Natural killer cell (primary cell): ENCODE measurements at regions of chr9 and their contacts with region 1.

Region 1: DNA sequence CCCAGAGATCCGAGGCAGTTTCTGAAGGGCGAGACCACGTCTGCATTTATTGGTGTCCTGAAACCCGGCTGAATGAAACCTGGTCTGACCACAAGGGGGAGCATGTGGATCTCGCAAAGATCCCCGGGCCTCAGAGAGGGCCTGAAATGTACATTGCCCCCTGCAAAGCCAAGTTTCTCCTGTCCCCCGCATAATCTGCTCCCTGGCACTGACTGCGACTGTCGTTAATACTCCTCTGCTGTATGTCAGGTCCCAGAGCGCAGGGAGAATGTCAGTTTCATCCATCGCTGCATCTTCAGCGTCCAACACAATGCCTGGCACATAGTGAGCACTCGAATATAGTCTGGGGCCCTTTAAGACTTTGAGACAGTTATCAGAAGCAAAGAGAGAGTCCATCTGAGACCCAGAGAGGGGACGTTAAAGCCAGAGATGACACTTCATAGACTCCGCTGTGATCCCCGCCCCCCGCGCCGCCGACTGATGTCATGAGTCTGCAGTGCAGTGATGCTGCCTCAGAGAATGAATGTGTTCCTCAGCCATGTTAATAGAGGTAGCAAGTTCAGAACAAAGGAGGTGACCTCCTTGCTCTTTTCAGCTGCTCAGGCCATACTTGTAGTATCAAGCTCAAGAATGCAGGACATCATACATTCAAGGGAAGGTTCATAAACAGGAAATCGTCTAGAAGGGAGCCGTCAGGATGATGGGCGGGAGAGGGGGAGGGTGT is 74.5 kb upstream of the BARHL1 start:
- DNase-seq: peak; percentile 60 to 84
- ATAC-seq: peak; percentile 61 to 85 (median 82)
- H3K4me3 ChIP-seq: no peak overlapping the region
- H3K4me3 Mint-ChIP-seq: peak overlapping the region; percentile 13
- H3K27ac ChIP-seq: no peak overlapping the region
- H3K27ac Mint-ChIP-seq: no peak overlapping the region
- H3K4me1 ChIP-seq: peaks cover 19% of the 10 kb centered on the region
- H3K4me1 Mint-ChIP-seq: peaks cover 17% of the 10 kb centered on the region in 2 donors
- H3K27me3 ChIP-seq: no peaks in the 10 kb centered on the region
- H3K27me3 Mint-ChIP-seq: peaks cover 18 to 45% of the 10 kb centered on the region in 2 donors
- CTCF ChIP-seq: peak; percentile 87

Region 2: GRCh38 chr9:132800038-132800648 is 292.2 kb after region 1 on chr9:
- intact Hi-C with region 1: loop called (anchors 1 kb)
- DNase-seq: peak; percentile 42 to 84
- ATAC-seq: peak; percentile 72 to 86 (median 83)
- H3K4me3 ChIP-seq: no peak overlapping the region
- H3K4me3 Mint-ChIP-seq: no peak overlapping the region
- H3K27ac ChIP-seq: no peak overlapping the region
- H3K27ac Mint-ChIP-seq: no peak overlapping the region
- H3K4me1 ChIP-seq: peaks cover 25% of the 10 kb centered on the region
- H3K4me1 Mint-ChIP-seq: peaks cover 25 to 43% of the 10 kb centered on the region in 2 donors
- H3K27me3 ChIP-seq: no peaks in the 10 kb centered on the region
- H3K27me3 Mint-ChIP-seq: peaks cover 0 to 16% of the 10 kb centered on the region in 2 donors
- CTCF ChIP-seq: peak; percentile 85

Region 3: DNA sequence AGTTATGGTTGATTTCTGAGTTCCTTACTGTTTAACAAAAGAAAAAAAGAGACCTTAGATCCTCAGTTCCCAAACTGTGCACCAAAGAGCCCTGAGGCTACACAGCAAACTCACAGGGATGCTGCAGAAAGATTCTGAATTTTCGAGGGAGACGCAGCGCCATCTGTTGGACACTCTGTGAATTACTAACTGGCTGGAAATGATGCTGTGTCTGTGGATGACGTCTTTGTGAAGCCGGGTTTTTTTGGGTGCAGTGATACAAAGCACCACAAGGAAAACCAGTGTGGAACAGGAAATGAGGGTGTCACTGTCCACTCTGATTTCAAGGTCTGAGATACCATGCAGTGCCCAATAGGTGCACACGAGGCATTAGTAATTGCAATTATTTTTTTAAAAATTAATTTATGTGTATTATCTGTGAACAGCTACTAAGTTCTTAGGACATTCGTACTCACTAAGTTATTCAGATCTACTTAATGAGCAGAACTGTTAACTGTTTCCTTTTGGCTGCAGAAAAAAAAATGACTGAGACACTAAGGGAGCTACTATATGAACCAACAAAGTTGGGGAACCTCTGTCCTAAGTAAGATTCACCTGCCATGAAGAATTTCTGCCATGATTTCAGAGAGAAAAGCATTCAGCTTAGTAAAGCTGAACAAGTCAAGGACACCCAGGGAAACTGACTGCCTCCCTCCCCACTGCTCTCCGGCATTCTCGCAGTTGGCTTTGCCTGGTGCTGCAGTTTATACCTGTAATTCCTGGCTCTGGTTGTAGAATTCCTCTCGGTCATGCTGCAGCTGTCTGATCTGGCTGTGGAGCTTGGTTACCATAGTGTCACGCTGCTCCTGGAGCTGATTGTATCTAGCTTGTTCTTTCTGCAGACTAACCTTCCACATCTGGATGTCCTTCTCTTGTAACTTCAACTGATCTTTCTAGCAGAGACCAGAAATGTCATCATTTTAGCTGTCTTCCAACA is 394.2 kb after region 1 on chr9:
- intact Hi-C with region 1: loop called (anchors 2 kb)
- DNase-seq: peak; percentile 75 to 92
- ATAC-seq: peak; percentile 95 to 99 (median 99)
- H3K4me3 ChIP-seq: no peak overlapping the region
- H3K4me3 Mint-ChIP-seq: no peak overlapping the region
- H3K27ac ChIP-seq: no peak overlapping the region
- H3K27ac Mint-ChIP-seq: peak overlapping the region; percentile 10 to 75
- H3K4me1 ChIP-seq: peaks cover 8% of the 10 kb centered on the region
- H3K4me1 Mint-ChIP-seq: peaks cover 0 to 6% of the 10 kb centered on the region in 2 donors
- H3K27me3 ChIP-seq: no peaks in the 10 kb centered on the region
- H3K27me3 Mint-ChIP-seq: no peaks in the 10 kb centered on the region
- CTCF ChIP-seq: peak; percentile 94

Region 4: GRCh38 chr9:132973713-132974112 is 465.8 kb after region 1 on chr9:
- intact Hi-C with region 1: loop called (anchors 2 kb)
- DNase-seq: peak in 1 of 2 donors; percentile 30
- ATAC-seq: no peak
- H3K4me3 ChIP-seq: no peak overlapping the region
- H3K4me3 Mint-ChIP-seq: no peak overlapping the region
- H3K27ac ChIP-seq: no peak overlapping the region
- H3K27ac Mint-ChIP-seq: no peak overlapping the region
- H3K4me1 ChIP-seq: peaks cover 19% of the 10 kb centered on the region
- H3K4me1 Mint-ChIP-seq: peaks cover 5 to 8% of the 10 kb centered on the region in 2 donors
- H3K27me3 ChIP-seq: peaks cover under 1% of the 10 kb centered on the region
- H3K27me3 Mint-ChIP-seq: peaks cover 6 to 12% of the 10 kb centered on the region in 2 donors
- CTCF ChIP-seq: no peak